H1 (cell line): ENCODE measurements at regions of chr1 and their contacts with region 1.

Region 1: DNA sequence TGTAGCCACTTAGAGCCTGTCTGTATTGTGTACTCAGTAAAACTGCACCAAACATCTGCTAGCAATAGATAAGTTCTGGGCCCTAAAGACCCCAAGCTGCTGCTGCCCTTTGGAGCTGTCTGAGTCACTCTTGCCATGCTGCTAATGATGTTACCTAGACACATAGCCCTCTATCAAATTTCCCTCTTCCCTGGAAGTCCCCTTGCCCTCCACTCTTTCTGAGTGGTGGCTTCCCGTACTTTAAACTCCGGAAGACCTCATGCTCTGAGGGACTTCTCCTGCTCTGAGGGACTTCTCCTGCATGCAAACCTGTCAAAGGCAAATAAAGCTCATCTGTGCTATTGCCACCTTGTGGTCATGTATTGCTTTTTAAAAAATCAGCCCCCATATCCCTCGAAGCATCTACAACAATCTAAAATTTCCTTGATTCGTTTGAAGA is 34.0 kb downstream of the FH start:
- DNase-seq: no peak
- H3K4me3 ChIP-seq: no peak overlapping the region
- H3K27ac ChIP-seq: no peak overlapping the region
- H3K4me1 ChIP-seq: no peaks in the 10 kb centered on the region
- H3K27me3 ChIP-seq: no peaks in the 10 kb centered on the region
- CTCF ChIP-seq: peak in 2 of 3 experiments; percentile 45 to 67; a peak in 3 of 4 replicates
- EP300 ChIP-seq: no peak
- POLR2A ChIP-seq: no peak
- RAD21 ChIP-seq: peak; percentile 61 to 69

Region 2: GRCh38 chr1:240888039-240888786 is 597.4 kb before region 1 on chr1:
- CTCF ChIA-PET with region 1: interaction called, 10 read pairs
- POLR2A ChIA-PET with region 1: no interaction called
- DNase-seq: peak; percentile 46 to 87
- H3K4me3 ChIP-seq: no peak overlapping the region
- H3K27ac ChIP-seq: no peak overlapping the region
- H3K4me1 ChIP-seq: peaks cover 0 to 6% (median 0%) of the 10 kb centered on the region in 4 experiments; a peak in 1 of 7 replicates
- H3K27me3 ChIP-seq: no peaks in the 10 kb centered on the region
- CTCF ChIP-seq: peak; percentile 80 to 89 (median 86)
- EP300 ChIP-seq: no peak
- POLR2A ChIP-seq: no peak
- RAD21 ChIP-seq: peak; percentile 99 to 100

Region 3: GRCh38 chr1:240967070-240967724 is 518.4 kb before region 1 on chr1:
- CTCF ChIA-PET with region 1: interaction called, 15 read pairs
- POLR2A ChIA-PET with region 1: no interaction called
- DNase-seq: no peak
- H3K4me3 ChIP-seq: no peak overlapping the region
- H3K27ac ChIP-seq: no peak overlapping the region
- H3K4me1 ChIP-seq: peaks cover 0 to 7% (median 3%) of the 10 kb centered on the region in 4 experiments; a peak in 3 of 7 replicates
- H3K27me3 ChIP-seq: no peaks in the 10 kb centered on the region
- CTCF ChIP-seq: peak in 2 of 3 experiments; percentile 49 to 54; a peak in 2 of 4 replicates
- EP300 ChIP-seq: no peak
- POLR2A ChIP-seq: no peak
- RAD21 ChIP-seq: peak; percentile 91 to 92

Region 4: DNA sequence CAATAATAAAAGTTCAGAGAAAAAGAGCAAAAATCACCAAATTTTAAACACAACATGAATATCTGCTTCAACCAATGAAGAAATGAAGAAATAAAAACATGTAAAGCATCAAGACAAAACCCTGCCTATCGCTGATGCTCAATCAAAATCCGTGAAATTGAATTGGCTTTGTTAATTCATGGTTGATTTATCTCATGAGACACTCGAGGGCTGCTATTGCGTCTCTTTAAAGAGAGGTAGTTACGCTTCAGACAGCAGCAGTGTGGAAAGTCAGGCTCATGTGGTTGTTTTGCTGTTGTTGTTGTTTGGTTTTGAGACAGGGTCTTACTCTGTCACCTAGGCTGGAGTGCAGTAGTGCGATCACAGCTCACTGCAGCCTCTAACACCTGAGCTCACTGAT is 63.1 kb before region 1 on chr1:
- CTCF ChIA-PET with region 1: interaction called, 10 read pairs
- POLR2A ChIA-PET with region 1: no interaction called
- DNase-seq: no peak
- H3K4me3 ChIP-seq: no peak overlapping the region
- H3K27ac ChIP-seq: no peak overlapping the region
- H3K4me1 ChIP-seq: peaks cover 0 to 6% (median 1%) of the 10 kb centered on the region in 4 experiments; a peak in 2 of 7 replicates
- H3K27me3 ChIP-seq: peaks cover 0 to 12% (median 6%) of the 10 kb centered on the region in 4 experiments; a peak in 4 of 7 replicates
- CTCF ChIP-seq: no peak
- EP300 ChIP-seq: no peak
- POLR2A ChIP-seq: no peak
- RAD21 ChIP-seq: no peak

Region 5: DNA sequence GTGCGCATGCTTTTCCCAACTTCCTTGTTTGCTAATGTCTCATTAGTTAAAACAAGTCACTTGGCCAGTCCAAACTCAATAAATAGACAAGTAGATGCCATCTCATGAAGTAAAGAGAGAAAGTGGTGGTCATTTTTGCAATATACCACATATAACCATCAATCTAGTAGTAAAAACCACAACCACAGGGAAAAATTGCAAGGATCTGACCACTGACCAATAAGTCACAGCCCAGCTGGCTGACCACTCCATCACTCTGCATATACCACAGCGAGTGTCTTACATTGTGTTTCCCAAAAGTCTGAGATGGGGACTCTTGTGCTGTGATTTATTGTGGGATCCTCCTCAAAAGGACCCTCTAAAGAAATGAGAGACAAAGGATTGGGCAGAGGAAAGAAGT is 42.0 kb before region 1 on chr1:
- CTCF ChIA-PET with region 1: no interaction called
- POLR2A ChIA-PET with region 1: no interaction called
- DNase-seq: no peak
- H3K4me3 ChIP-seq: no peak overlapping the region
- H3K27ac ChIP-seq: no peak overlapping the region
- H3K4me1 ChIP-seq: peaks cover 0 to 6% (median 3%) of the 10 kb centered on the region in 4 experiments; a peak in 3 of 7 replicates
- H3K27me3 ChIP-seq: no peaks in the 10 kb centered on the region; a peak in 1 of 7 replicates
- CTCF ChIP-seq: no peak
- EP300 ChIP-seq: no peak
- POLR2A ChIP-seq: no peak
- RAD21 ChIP-seq: no peak

Region 6: DNA sequence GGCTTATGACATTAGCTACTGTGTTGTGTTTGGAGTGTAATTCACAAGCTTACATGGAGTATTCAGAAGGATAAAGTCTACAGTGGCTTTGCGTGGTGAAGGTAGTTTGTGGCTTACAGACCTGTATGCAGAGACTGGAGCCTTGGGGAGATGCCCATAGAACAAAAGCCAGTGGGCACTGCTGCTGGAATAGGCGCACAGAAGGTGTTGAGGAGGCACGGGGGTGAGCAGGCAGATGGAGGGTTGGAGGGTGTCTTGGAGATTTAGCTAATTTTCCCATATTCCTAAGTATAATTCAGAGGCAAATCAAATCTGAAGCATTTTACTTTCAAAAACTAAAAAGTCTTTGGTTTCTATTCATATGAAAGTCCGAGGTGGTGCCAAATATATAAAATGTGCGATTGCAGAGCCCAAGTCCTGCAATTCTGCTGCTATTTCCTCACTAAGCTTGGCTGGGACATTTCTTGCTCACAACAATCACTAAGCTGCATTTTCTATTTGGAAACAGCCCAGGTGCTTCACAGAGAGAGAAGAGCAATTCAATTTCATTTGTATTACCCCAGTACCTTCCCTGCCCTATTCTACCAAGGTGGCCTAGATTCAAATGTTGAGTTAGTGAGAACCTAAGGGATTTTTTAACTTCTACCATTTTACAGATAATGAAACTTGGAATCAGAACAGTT is 14.5 kb before region 1 on chr1:
- CTCF ChIA-PET with region 1: interaction called, 11 read pairs
- POLR2A ChIA-PET with region 1: no interaction called
- DNase-seq: no peak
- H3K4me3 ChIP-seq: no peak overlapping the region
- H3K27ac ChIP-seq: no peak overlapping the region
- H3K4me1 ChIP-seq: no peaks in the 10 kb centered on the region
- H3K27me3 ChIP-seq: no peaks in the 10 kb centered on the region
- CTCF ChIP-seq: no peak
- EP300 ChIP-seq: no peak
- POLR2A ChIP-seq: no peak
- RAD21 ChIP-seq: no peak

Region 7: DNA sequence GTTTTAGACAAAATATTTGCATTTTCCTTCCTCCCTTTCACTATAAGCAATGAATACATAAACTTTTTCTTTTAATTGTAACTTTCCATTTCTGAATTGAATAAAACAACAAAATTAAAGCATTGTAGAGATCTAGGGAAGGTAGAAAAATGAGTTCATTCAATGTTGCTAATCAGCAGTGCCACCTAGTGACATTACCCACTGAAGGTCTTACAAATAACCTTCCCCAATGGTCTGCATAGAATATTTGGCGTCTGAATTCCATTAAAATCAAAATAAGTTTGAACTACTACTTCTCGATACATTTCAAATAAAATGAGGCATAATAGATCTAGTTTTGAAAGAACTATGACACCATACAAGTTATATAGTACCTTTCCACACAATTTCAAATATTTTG is 14.3 kb after region 1 on chr1:
- CTCF ChIA-PET with region 1: interaction called, 10 read pairs
- POLR2A ChIA-PET with region 1: no interaction called
- DNase-seq: no peak
- H3K4me3 ChIP-seq: no peak overlapping the region
- H3K27ac ChIP-seq: no peak overlapping the region
- H3K4me1 ChIP-seq: no peaks in the 10 kb centered on the region
- H3K27me3 ChIP-seq: no peaks in the 10 kb centered on the region
- CTCF ChIP-seq: peak in 2 of 3 experiments; percentile 32 to 58; a peak in 2 of 4 replicates
- EP300 ChIP-seq: no peak
- POLR2A ChIP-seq: no peak
- RAD21 ChIP-seq: peak; percentile 73 to 80